ENCODE measurements at regions of chr16 and their contacts with region 1.

Region 1: DNA sequence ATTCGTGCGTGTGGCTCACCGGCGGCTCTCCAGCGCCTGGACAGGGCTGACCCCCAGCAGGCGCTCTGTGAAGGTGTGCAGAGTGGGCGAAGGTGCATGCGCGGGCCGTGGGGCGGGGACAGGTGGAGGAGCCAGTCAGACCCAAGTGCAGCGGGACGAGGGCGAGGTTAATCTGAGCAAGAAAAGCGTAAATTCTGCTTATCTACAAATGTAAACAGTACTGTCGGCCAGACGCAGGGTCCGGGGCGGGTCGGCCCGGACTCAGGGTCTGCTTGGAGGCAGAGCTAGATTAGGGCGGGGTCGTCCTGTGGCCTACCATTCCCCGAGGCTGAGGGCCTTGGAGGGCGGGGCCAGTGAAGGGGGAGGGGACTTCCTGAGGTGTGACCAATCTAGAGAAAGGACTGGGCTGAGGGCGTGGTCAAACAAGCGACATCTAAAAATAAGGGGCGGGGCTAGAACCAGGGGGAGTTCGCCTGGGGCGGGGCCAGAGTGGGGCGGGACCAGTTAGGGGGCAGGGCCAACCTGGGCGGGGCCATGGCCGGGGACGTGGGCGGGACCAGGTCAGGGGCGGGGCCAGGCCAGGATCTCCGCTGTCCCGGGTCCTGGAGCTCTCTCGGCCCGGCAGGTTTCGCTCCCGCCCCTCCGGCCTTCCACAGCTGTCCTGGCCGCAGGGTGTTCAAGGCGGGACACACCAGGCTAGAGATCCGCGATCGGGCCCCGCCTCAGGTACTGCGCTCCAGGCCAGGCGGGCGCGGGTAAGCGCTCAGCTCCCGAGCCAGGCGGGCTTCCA is at the start of gene SEC14L5:
- DNase-seq: peak; percentile 94 to 97
- ATAC-seq: peak; percentile 94 to 98 (median 96)
- H3K4me3 ChIP-seq: peak within 1 kb of the TSS; percentile 19 to 58 (median 48)
- H3K27ac ChIP-seq: peak within 1 kb of the TSS in 6 of 10 donors; percentile 0 to 58 (median 40)
- H3K4me1 ChIP-seq: peaks cover 0 to 25% (median 17%) of the 10 kb centered on the region in 9 donors
- H3K27me3 ChIP-seq: peaks cover 0 to 33% (median 0%) of the 10 kb centered on the region in 7 donors
- CTCF ChIP-seq: no peak
- total RNA-seq, gene SEC14L5: 4.7 to 28.4 (median 12.9) TPM

Region 2: DNA sequence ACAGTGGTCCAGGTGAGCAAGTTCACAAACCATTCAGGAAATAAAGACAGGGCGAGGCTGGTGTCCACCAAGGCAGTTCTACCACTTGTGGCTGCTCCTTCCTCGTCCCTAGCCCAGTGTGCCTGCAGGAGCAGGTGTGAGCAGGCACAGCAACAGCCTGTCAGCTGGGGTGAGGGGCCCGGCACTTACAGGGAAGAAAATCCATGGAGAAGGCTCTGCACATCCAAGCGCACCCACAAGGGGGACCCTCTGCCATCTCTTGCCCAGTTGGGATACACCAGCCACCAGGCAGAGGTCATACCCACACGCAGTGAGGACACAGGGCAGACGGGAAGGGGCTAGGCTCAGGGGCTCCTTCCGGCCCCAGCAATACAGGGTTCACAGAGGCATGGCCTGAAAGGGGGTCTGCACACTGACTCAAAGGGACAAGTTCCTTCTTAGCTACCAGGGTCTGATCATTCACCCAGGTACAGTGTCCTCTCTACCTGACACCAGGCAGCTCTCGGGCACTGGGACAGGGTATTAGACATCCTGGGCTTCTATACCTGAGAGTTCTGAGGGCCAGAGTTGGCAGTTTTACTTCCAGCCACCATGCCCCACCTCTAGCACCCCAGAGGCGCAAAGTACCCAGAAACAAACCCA is 446.4 kb before region 1 on chr16:
- intact Hi-C with region 1: loop called in 3 of 10 experiments (anchors 10 kb)
- DNase-seq: peak; percentile 45 to 54
- ATAC-seq: peak; percentile 45 to 66 (median 58)
- H3K4me3 ChIP-seq: no peak overlapping the region
- H3K27ac ChIP-seq: peak overlapping the region; percentile 34 to 87 (median 56)
- H3K4me1 ChIP-seq: peaks cover 26 to 64% (median 55%) of the 10 kb centered on the region in 9 donors
- H3K27me3 ChIP-seq: no peaks in the 10 kb centered on the region
- CTCF ChIP-seq: peak; percentile 17 to 64 (median 58)

Region 3: GRCh38 chr16:4734063-4734729 is 223.7 kb before region 1 on chr16 and contains the starts of genes ANKS3 and DNAAF8:
- intact Hi-C with region 1: loop called in 1 of 10 experiments (anchors 10 kb)
- DNase-seq: peak; percentile 95 to 96
- ATAC-seq: peak; percentile 96 to 98 (median 98)
- H3K4me3 ChIP-seq: peak within 1 kb of the TSS; percentile 77 to 99 (median 93)
- H3K27ac ChIP-seq: peak within 1 kb of the TSS in 9 of 10 donors; percentile 66 to 85 (median 80)
- H3K4me1 ChIP-seq: peaks cover 2 to 20% (median 15%) of the 10 kb centered on the region in 9 donors
- H3K27me3 ChIP-seq: no peaks in the 10 kb centered on the region
- CTCF ChIP-seq: no peak
- total RNA-seq, gene ANKS3: 5.1 to 11.4 (median 7.9) TPM
- total RNA-seq, gene DNAAF8: 0.32 to 1.9 (median 1.1) TPM in 8 of 10 donors, not detected in the others

Region 4: DNA sequence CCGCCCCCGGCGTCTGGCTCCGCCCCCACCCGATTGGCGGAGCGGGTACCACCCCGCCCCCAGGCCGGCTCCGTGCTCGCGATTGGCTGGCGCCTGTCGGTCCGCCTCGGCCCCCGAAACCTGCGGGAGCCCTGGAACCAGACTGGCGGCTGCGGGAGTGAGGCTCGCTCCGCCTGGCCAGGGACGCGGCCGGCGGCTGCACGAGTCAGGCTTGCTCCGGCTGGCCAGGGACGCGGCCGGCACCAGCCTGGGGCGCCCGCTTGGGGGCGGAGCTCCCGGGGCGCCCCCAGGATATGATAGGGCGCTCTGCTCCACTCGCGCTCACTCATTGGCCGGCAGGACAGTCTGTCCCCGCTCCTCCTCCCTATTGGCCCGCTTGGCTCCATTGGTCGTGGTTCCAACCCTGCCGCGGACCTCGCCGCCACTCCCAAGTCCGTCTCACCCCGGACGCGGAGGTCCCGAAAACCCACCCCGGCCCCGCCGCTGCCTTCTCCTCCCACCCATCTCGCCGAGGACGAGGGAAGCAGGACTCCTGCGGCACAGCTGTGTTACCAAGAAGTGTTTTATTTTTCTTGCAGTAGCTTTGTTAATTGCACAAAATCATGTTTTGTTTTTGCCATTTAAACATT is 155.1 kb before region 1 on chr16:
- intact Hi-C with region 1: loop called in 2 of 10 experiments (anchors 2 to 5 kb)
- DNase-seq: peak; percentile 93 to 94
- ATAC-seq: peak; percentile 90 to 96 (median 92)
- H3K4me3 ChIP-seq: peak overlapping the region; percentile 64 to 95 (median 84)
- H3K27ac ChIP-seq: peak overlapping the region; percentile 67 to 96 (median 92)
- H3K4me1 ChIP-seq: peaks cover 0 to 51% (median 29%) of the 10 kb centered on the region in 9 donors
- H3K27me3 ChIP-seq: no peaks in the 10 kb centered on the region
- CTCF ChIP-seq: peak in 7 of 9 donors; percentile 15 to 52 (median 32)

Region 5: DNA sequence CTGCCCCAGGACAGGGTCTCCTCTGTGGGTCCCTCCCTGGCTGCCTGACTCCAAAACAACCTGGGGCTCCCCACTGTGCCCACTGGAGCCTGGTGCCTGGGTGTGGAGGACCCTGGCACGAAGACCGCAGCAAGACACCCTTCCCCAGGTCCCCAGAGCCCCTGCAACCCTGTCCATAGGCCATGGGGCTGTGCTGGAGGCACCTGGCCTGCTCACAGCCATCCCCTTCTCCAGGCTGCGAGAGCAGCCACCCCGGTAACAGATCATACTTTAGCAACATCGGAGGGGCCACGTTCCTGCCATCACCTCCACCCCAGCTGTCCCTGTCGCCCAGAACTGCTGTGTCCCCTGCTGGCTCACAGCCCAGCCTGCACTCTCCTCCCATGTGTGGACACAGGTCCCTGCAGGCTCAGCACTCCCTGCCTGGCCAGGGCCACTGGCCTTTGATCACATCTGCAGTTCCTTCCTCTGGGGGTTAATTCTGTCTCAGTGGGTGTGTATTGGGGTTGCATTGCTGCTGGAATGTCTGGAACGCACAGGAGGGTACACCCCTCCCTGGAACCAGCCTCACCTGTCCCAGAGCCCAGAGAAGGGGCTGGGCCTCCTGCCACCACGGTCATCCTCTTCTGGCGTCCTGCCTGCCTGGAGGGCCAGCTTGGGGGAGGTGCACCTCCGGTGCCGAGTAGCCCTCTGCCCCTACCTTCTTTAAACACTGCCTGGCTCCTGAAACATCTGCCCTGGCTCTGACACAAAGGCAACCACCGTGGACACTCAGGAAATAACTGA is 33.1 kb before region 1 on chr16:
- intact Hi-C with region 1: no loop called
- DNase-seq: no peak
- ATAC-seq: peak in 5 of 8 donors; percentile 17 to 57 (median 37)
- H3K4me3 ChIP-seq: no peak overlapping the region
- H3K27ac ChIP-seq: no peak overlapping the region
- H3K4me1 ChIP-seq: peaks cover 0 to 5% (median 0%) of the 10 kb centered on the region in 9 donors
- H3K27me3 ChIP-seq: no peaks in the 10 kb centered on the region
- CTCF ChIP-seq: no peak

Measured in heart right ventricle (tissue), 16 donors.